HCT116 (cell line): ENCODE measurements at regions of chr2 and their contacts with region 1.

Region 1: GRCh38 chr2:34747643-34748042 is 1148.5 kb upstream of the FAM98A start:
- DNase-seq: no peak
- ATAC-seq: no peak
- H3K4me3 ChIP-seq: no peak overlapping the region
- H3K27ac ChIP-seq: no peak overlapping the region
- H3K4me1 ChIP-seq: no peaks in the 10 kb centered on the region
- H3K27me3 ChIP-seq: no peaks in the 10 kb centered on the region
- CTCF ChIP-seq: no peak
- POLR2A ChIP-seq: no peak
- RAD21 ChIP-seq: no peak

Region 2: DNA sequence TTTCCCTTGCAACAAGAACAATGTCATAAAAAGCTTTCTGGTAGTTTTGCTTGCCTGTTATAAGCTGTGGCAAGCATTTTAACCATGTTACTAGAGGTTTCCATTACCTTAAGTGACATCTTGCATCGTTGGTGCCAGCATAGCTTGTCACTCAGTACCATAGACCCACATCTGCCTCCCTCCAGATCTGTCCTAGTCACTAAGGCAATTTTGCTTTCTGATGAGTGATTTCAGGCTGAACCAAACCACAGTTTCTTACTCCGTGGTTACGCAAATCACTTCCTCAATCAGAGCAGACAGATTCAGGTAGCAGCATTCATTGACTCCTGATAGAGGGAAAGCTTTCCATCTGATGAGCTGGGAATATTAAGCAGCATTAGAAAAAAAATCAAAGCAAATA is 91.0 kb before region 1 on chr2:
- CTCF ChIA-PET with region 1: no interaction called
- POLR2A ChIA-PET with region 1: no interaction called
- RAD21 ChIA-PET with region 1: no interaction called
- intact Hi-C with region 1: no loop called
- DNase-seq: no peak
- ATAC-seq: no peak
- H3K4me3 ChIP-seq: no peak overlapping the region
- H3K27ac ChIP-seq: no peak overlapping the region
- H3K4me1 ChIP-seq: no peaks in the 10 kb centered on the region
- H3K27me3 ChIP-seq: no peaks in the 10 kb centered on the region
- CTCF ChIP-seq: no peak
- POLR2A ChIP-seq: no peak
- RAD21 ChIP-seq: no peak

Region 3: GRCh38 chr2:34719207-34719606 is 28.4 kb before region 1 on chr2:
- CTCF ChIA-PET with region 1: no interaction called
- POLR2A ChIA-PET with region 1: no interaction called
- RAD21 ChIA-PET with region 1: no interaction called
- intact Hi-C with region 1: loop called (anchors 1 kb)
- DNase-seq: no peak
- ATAC-seq: no peak
- H3K4me3 ChIP-seq: no peak overlapping the region
- H3K27ac ChIP-seq: no peak overlapping the region
- H3K4me1 ChIP-seq: no peaks in the 10 kb centered on the region
- H3K27me3 ChIP-seq: no peaks in the 10 kb centered on the region
- CTCF ChIP-seq: no peak
- POLR2A ChIP-seq: no peak
- RAD21 ChIP-seq: no peak